Calu3 (cell line): ENCODE measurements at regions of chr13 and their contacts with region 1.

Region 1: DNA sequence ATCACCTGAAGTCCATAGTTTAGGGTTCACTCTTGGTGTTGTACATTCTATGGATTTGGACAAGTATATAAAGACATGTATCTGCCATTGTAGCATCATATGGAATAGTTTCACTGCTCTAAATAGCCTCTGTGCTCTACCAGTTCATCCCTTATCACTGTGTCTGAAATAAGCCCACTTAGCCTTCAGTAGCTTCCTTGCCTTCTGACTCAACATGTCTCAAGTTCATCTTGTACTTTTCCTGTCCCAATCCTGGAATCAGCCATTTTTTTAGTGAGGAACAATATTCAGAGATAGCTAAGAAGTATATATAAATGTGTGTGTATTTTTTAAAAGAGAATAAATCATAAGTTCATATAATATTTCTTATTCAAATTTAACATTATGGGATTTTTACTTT is 79.2 kb downstream of the DHRS12 start:
- DNase-seq: no peak
- H3K4me3 Mint-ChIP-seq: no peak overlapping the region
- H3K27ac Mint-ChIP-seq: no peak overlapping the region
- H3K4me1 Mint-ChIP-seq: no peaks in the 10 kb centered on the region
- H3K27me3 Mint-ChIP-seq: no peaks in the 10 kb centered on the region
- CTCF ChIP-seq: no peak

Region 2: DNA sequence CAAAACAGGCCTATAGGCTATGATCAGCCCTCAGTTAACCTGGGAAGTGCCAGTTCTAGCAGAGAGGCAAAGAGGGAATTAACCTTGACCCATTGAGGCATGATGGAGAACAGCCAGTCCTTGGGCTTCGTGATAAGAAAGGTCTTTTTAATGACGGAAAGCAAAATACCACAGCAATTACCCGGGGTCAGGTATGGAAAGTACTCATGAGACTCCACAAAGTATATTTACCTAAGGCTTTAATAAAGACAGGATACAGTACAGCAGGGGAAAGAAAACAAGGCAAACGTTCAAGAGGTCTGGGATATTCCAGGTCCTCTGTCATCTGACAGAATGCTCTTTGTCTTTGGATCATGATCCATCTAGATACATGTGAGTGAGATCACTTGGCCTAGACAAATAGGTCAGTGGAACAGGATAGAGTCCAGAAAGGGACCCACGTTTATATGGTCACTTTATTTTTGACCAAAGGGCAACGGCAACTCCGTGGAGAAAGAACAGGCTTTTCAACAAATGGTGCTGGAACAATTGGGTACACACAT is 88.3 kb before region 1 on chr13:
- CTCF ChIA-PET with region 1: no interaction called
- intact Hi-C with region 1: loop called (anchors 2 kb)
- DNase-seq: no peak
- H3K4me3 Mint-ChIP-seq: peak overlapping the region; percentile 27
- H3K27ac Mint-ChIP-seq: peak overlapping the region; percentile 34
- H3K4me1 Mint-ChIP-seq: peaks cover 50% of the 10 kb centered on the region
- H3K27me3 Mint-ChIP-seq: no peaks in the 10 kb centered on the region
- CTCF ChIP-seq: no peak